HEK293 (cell line): ENCODE measurements at regions of chr1 and their contacts with region 1.

Region 1: DNA sequence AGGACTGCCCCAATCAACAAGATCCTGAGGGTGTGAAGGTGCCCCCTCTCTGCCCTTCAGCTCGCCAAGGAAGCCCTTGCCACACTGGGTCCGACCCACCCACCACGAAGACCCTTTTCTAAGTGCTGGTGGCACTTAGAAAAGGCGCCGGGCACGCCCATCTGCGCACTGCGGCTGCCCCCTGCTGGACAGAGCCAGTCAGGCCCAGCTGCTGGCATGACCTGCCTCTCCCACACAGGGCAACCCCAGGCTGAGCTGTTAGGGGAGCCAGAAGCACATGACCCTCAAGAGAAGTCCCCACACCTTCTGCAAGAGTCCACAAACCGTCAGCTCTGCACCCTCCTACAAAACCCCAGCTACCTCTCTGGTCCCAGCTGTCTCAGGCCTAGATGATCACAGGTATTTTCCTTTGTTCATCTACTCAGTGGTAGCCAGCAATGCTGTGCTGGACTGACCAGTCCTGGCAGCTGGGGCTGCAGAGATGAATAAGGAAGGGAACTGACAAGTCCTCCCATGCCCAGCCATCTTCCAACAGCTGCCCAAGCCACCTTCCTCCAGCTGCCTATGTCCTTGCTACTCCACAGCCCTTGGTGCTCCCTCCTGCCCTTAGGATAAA is 40.0 kb upstream of the ZC3H12A start:
- H3K4me3 ChIP-seq: no peak overlapping the region
- H3K27ac ChIP-seq: no peak overlapping the region
- H3K4me1 ChIP-seq: no peaks in the 10 kb centered on the region
- CTCF ChIP-seq: peak; percentile 76; the same call in 1 of the 2 replicates

Region 2: DNA sequence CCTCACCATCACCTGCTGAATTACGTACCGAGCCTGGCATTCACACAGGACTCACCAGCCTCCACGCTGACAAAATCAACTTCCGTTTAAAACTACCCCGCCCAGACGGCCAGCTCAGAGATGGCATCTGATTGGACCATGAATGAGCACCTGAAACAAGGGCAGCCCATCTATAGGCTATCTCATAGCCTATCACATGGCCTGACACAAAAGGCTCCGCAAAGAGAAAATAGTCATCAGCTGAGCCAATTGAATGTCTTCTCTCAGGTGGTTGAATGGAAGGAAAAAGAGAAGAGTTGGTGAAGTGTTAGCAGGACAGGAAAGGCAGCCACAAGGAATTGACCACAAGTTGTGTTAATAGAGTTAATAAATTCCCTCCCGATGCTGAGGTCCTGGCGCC is 10.6 kb before region 1 on chr1:
- CTCF ChIA-PET with region 1: interaction called, 15 read pairs
- POLR2A ChIA-PET with region 1: no interaction called
- H3K4me3 ChIP-seq: no peak overlapping the region
- H3K27ac ChIP-seq: no peak overlapping the region
- H3K4me1 ChIP-seq: no peaks in the 10 kb centered on the region
- CTCF ChIP-seq: no peak

Region 3: DNA sequence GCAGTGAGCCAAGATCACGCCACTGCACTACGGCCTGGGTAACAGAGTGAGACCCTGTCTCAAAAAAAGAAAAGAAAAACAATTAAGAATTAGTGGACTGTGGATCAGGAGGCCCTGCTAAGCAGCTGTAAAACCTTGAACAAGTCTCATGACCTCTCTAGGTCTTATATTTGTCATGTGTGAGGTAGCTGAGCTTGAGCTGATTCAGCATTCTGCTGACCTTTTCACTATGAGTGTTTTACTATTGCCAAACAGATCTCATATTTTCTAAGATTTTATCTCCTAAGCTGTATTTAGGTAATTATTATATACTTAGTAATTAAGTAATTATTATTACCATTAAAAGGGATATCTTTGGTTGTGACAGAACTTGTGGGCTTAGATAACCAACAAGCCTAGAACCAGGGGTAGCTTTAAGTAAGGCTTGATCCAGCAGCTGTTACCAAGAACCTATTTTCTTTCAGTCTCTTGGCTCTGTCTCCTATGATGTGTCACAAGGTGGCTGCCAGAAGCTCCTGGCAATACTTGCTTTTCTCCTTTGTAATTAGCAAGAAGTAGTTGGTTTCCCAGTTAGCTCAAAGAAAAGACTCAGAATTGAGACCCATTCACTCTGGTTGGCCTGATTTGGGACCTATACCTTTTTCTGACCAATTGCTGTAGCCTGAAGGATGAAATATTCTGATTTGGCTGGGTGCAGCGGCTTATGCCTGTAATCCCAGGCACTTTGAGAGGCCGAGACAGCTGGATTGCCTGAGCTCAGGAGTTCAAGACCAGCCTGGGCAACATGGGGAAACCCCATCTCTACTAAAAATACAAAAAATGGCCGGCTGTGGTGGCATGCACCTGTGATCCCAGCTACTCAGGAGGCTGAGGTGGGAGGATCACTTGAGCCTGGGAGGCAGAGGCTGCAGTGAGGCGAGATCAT is 31.5 kb after region 1 on chr1:
- CTCF ChIA-PET with region 1: no interaction called
- POLR2A ChIA-PET with region 1: no interaction called
- H3K4me3 ChIP-seq: no peak overlapping the region
- H3K27ac ChIP-seq: no peak overlapping the region
- H3K4me1 ChIP-seq: no peaks in the 10 kb centered on the region
- CTCF ChIP-seq: no peak

Region 4: DNA sequence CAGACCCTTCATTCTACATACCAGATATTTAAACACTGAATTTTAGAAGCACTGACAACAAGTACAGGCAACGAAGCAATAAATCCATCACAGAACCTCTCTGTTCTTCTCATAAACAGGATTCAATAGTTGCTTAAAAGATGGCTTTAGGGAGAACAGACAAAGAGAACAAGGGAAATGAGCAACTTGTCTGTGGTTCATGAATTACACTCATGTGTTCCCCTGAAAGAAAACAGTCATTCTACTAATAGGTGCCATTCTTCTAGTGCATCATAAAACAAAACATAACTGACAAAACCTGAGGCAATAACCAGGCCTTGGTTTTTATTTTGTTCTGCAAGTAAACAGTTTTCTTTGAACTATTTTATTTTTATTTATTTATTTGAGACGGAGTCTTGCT is 154.5 kb after region 1 on chr1:
- CTCF ChIA-PET with region 1: no interaction called
- POLR2A ChIA-PET with region 1: no interaction called
- H3K4me3 ChIP-seq: no peak overlapping the region
- H3K27ac ChIP-seq: no peak overlapping the region
- H3K4me1 ChIP-seq: no peaks in the 10 kb centered on the region
- CTCF ChIP-seq: no peak